ENCODE measurements at regions of chr21 and their contacts with region 1.

Region 1: DNA sequence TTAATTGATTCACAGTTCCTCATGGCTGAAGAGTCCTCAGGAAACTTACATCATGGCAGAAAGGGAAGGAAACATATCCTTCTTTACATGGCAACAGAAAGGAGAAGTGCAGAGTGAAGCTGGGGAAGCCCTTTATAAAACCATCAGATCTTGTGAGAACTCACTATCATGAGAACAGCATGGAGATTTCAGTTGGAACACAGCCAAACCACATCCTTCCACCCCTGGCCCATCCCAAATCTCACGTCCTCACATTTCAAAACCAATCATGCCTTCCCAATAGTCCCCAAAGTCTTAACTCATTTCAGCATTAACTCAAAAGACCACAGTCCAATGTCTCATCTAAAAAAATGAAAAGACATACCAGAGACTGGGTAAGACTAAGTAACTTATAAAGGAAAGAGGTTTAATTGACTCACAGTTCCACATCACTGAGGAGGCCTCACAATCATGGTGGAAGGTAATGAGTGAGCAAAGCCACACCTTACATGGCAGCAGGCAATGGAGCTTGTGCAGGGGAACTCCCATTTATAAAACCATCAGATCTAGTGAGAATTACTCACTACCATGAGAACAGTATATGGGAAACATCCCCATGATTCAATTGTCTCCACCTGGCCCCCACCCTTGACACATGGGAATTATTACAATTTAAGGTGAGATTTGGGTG is 105.2 kb downstream of the MRPL39 start:
- DNase-seq: peak; percentile 87
- H3K4me3 Mint-ChIP-seq: peak overlapping the region; percentile 53
- H3K27ac Mint-ChIP-seq: peak overlapping the region; percentile 92
- H3K4me1 Mint-ChIP-seq: peaks cover 78% of the 10 kb centered on the region
- H3K27me3 Mint-ChIP-seq: no peaks in the 10 kb centered on the region

Region 2: GRCh38 chr21:25188677-25189079 is 313.5 kb before region 1 on chr21:
- CTCF ChIA-PET with region 1: no interaction called
- intact Hi-C with region 1: no loop called
- DNase-seq: peak; percentile 4
- H3K4me3 Mint-ChIP-seq: no peak overlapping the region
- H3K27ac Mint-ChIP-seq: no peak overlapping the region
- H3K4me1 Mint-ChIP-seq: no peaks in the 10 kb centered on the region
- H3K27me3 Mint-ChIP-seq: no peaks in the 10 kb centered on the region

Region 3: GRCh38 chr21:25428537-25428936 is 73.6 kb before region 1 on chr21:
- CTCF ChIA-PET with region 1: interaction called, 9 read pairs
- intact Hi-C with region 1: loop called (anchors 1 kb)
- DNase-seq: no peak
- H3K4me3 Mint-ChIP-seq: peak overlapping the region; percentile 44
- H3K27ac Mint-ChIP-seq: peak overlapping the region; percentile 64
- H3K4me1 Mint-ChIP-seq: peaks cover 48% of the 10 kb centered on the region
- H3K27me3 Mint-ChIP-seq: peaks cover 2% of the 10 kb centered on the region

Region 4: GRCh38 chr21:25464275-25464674 is 37.9 kb before region 1 on chr21:
- CTCF ChIA-PET with region 1: interaction called, 5 read pairs
- intact Hi-C with region 1: loop called (anchors 1 kb)
- DNase-seq: peak; percentile 51
- H3K4me3 Mint-ChIP-seq: peak overlapping the region; percentile 11
- H3K27ac Mint-ChIP-seq: peak overlapping the region; percentile 90
- H3K4me1 Mint-ChIP-seq: peaks cover 69% of the 10 kb centered on the region
- H3K27me3 Mint-ChIP-seq: no peaks in the 10 kb centered on the region

Region 5: GRCh38 chr21:25556091-25556490 is 54.0 kb after region 1 on chr21:
- CTCF ChIA-PET with region 1: interaction called, 8 read pairs
- intact Hi-C with region 1: loop called (anchors 1 kb)
- DNase-seq: no peak
- H3K4me3 Mint-ChIP-seq: no peak overlapping the region
- H3K27ac Mint-ChIP-seq: peak overlapping the region; percentile 70
- H3K4me1 Mint-ChIP-seq: peaks cover 63% of the 10 kb centered on the region
- H3K27me3 Mint-ChIP-seq: no peaks in the 10 kb centered on the region

Region 6: DNA sequence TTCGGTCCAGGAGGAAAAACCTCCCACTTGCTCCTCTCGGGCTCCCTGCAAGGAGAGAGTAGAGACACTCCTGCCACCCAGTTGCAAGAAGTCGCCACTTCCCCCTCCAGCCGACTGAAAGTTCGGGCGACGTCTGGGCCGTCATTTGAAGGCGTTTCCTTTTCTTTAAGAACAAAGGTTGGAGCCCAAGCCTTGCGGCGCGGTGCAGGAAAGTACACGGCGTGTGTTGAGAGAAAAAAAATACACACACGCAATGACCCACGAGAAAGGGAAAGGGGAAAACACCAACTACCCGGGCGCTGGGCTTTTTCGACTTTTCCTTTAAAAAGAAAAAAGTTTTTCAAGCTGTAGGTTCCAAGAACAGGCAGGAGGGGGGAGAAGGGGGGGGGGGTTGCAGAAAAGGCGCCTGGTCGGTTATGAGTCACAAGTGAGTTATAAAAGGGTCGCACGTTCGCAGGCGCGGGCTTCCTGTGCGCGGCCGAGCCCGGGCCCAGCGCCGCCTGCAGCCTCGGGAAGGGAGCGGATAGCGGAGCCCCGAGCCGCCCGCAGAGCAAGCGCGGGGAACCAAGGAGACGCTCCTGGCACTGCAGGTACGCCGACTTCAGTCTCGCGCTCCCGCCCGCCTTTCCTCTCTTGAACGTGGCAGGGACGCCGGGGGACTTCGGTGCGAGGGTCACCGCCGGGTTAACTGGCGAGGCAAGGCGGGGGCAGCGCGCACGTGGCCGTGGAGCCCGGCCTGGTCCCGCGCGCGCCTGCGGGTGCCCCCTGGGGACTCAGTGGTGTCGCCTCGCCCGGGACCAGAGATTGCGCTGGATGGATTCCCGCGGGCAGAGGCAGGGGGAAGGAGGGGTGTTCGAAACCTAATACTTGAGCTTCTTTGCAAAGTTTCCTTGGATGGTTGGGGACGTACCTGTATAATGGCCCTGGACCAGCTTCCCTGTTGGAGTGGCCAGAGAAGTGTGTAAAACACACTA is 59.8 kb after region 1 on chr21:
- CTCF ChIA-PET with region 1: interaction called, 8 read pairs
- intact Hi-C with region 1: loop called (anchors 1 kb)
- DNase-seq: peak; percentile 81
- H3K4me3 Mint-ChIP-seq: peak overlapping the region; percentile 91
- H3K27ac Mint-ChIP-seq: peak overlapping the region; percentile 96
- H3K4me1 Mint-ChIP-seq: peaks cover 45% of the 10 kb centered on the region
- H3K27me3 Mint-ChIP-seq: no peaks in the 10 kb centered on the region

Measured in activated naive CD4-positive, alpha-beta T cell treated with anti-CD3 and anti-CD28 coated beads for 36 hours (primary cell).